ENCODE measurements at regions of chr10 and their contacts with region 1.

Region 1: GRCh38 chr10:79195091-79195923 is 126.5 kb downstream of the ZMIZ1 start:
- DNase-seq: peak; percentile 76 to 89
- H3K4me3 ChIP-seq: no peak overlapping the region
- H3K27ac ChIP-seq: no peak overlapping the region
- H3K4me1 ChIP-seq: peaks cover 33% of the 10 kb centered on the region
- H3K27me3 ChIP-seq: no peaks in the 10 kb centered on the region
- CTCF ChIP-seq: peak; percentile 99

Region 2: GRCh38 chr10:78029269-78030226 is 1165.8 kb before region 1 on chr10 and contains the start of gene POLR3A:
- CTCF ChIA-PET with region 1: interaction called, 3 read pairs
- POLR2A ChIA-PET with region 1: no interaction called
- intact Hi-C with region 1: loop called (anchors 5 kb)
- DNase-seq: peak; percentile 93 to 96
- H3K4me3 ChIP-seq: peak within 1 kb of the TSS; percentile 74
- H3K27ac ChIP-seq: peak within 1 kb of the TSS; percentile 28
- H3K4me1 ChIP-seq: peaks cover 38% of the 10 kb centered on the region
- H3K27me3 ChIP-seq: no peaks in the 10 kb centered on the region
- CTCF ChIP-seq: peak; percentile 87
- total RNA-seq, gene POLR3A: 13.1 and 14.9 TPM in 2 replicates

Region 3: GRCh38 chr10:78302989-78303854 is 892.1 kb before region 1 on chr10:
- CTCF ChIA-PET with region 1: interaction called, 3 read pairs
- POLR2A ChIA-PET with region 1: no interaction called
- intact Hi-C with region 1: loop called (anchors 2 kb)
- DNase-seq: peak; percentile 83 to 98
- H3K4me3 ChIP-seq: peak overlapping the region; percentile 66
- H3K27ac ChIP-seq: peak overlapping the region; percentile 42; the same call in 1 of the 2 replicates
- H3K4me1 ChIP-seq: peaks cover 10% of the 10 kb centered on the region
- H3K27me3 ChIP-seq: no peaks in the 10 kb centered on the region
- CTCF ChIP-seq: peak; percentile 81

Region 4: DNA sequence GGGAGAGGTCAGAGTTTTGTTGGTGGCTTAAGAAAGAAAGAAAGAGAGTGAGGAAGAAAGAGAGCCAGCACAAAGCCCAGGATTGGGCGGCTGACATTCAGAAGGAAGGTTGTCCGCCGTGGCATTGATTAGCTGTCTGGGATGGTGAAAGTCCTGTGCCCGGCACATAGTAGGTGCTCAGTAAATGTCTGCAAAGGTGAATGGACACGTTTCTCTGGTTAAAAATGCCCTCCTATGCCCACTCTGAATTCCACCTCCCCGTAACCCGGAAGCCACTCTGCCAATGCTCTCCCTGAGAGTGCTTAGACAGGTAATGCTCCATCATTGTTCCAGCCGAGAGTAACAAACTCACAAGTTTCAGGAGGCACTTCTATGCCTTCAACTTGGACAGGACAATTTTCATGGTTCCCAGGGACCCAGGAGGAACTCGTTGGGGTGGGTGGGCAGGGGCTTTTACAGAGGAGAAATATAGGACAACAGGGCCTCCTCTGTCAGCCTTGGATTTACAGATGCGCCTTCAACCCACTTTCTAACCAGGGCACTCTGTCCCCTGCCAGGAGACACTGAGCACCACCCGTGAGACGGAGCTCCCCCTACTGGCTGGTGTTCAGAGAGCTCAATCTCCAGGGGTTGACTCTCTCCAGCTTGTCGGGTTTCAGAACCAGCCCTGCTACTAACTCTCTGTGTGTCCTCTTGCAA is 538.0 kb before region 1 on chr10:
- CTCF ChIA-PET with region 1: interaction called, 3 read pairs
- POLR2A ChIA-PET with region 1: no interaction called
- intact Hi-C with region 1: loop called (anchors 2 kb)
- DNase-seq: peak; percentile 40 to 77
- H3K4me3 ChIP-seq: no peak overlapping the region
- H3K27ac ChIP-seq: no peak overlapping the region
- H3K4me1 ChIP-seq: peaks cover 13% of the 10 kb centered on the region
- H3K27me3 ChIP-seq: peaks cover 6% of the 10 kb centered on the region; the same call in 1 of the 2 replicates
- CTCF ChIP-seq: peak; percentile 83

Region 5: GRCh38 chr10:78972947-78973900 is 222.1 kb before region 1 on chr10:
- CTCF ChIA-PET with region 1: no interaction called
- POLR2A ChIA-PET with region 1: interaction called, 3 read pairs
- intact Hi-C with region 1: loop called (anchors 2 kb)
- DNase-seq: peak; percentile 89 to 93
- H3K4me3 ChIP-seq: peak overlapping the region; percentile 59
- H3K27ac ChIP-seq: peak overlapping the region; percentile 94
- H3K4me1 ChIP-seq: peaks cover 58% of the 10 kb centered on the region
- H3K27me3 ChIP-seq: no peaks in the 10 kb centered on the region
- CTCF ChIP-seq: no peak

Region 6: GRCh38 chr10:79162861-79163665 is 32.2 kb before region 1 on chr10:
- CTCF ChIA-PET with region 1: interaction called, 5 read pairs
- POLR2A ChIA-PET with region 1: no interaction called
- intact Hi-C with region 1: loop called (anchors 1 kb)
- DNase-seq: peak; percentile 86 to 88
- H3K4me3 ChIP-seq: no peak overlapping the region
- H3K27ac ChIP-seq: peak overlapping the region; percentile 39; the same call in 1 of the 2 replicates
- H3K4me1 ChIP-seq: peaks cover 24% of the 10 kb centered on the region
- H3K27me3 ChIP-seq: no peaks in the 10 kb centered on the region
- CTCF ChIP-seq: no peak